T-cell (primary cell): ENCODE measurements at regions of chr7 and their contacts with region 1.

Region 1: DNA sequence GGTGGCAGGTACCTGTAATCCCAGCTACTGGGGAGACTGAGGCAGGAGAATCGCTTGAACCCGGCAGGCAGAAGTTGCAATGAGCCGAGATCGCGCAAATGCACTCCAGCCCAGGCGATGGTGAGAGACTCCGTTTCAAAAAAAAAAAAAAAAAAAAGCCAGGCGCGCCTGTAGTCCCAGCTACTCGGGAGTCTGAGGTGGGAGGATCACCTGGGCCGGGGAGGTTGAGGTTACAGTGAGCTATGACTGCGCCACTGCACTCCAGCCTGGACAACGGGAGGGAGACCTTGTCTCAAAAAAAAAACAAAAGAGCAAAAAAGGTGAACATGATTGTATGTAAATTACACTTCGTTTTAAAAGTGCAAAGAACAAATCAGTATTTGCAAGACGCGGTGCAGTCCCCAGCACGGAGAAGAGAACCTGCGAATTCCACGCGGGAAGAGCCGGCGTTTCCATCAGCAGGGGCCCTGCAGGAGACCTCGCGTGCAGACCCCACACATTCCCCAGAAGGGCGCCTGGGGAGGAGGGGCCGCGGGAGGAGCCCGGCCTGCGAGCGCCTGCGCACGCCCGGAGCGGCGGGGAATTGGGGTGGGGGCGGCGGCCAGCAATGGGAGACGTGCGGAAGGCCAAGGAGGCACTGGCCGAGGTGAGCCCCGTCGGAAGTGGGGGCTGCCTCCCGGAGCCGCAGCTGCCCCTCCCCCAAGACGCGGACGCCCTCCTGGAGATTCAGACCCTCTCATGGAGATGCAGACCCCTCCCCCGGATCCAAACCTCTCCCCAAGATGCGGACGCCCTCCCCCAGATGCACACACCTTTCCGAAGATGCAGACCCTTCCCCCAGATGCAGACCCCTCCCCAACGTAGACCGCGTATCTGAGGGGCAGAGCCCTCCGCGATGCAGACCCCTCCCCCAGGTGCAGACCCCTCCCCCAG is 16.7 kb upstream of the SUN1 start:
- DNase-seq: peak in 4 of 35 experiments; percentile 8 to 29 (median 13)
- ATAC-seq: no peak
- H3K4me3 ChIP-seq: peak overlapping the region; percentile 53 to 57
- H3K4me3 Mint-ChIP-seq: peak overlapping the region; percentile 76 to 94 (median 88)
- H3K27ac ChIP-seq: no peak overlapping the region
- H3K27ac Mint-ChIP-seq: peak overlapping the region in 1 of 2 donors; percentile 69
- H3K4me1 ChIP-seq: peaks cover 26 to 46% of the 10 kb centered on the region in 2 experiments
- H3K4me1 Mint-ChIP-seq: peaks cover 56 to 68% (median 58%) of the 10 kb centered on the region in 3 donors
- H3K27me3 ChIP-seq: peaks cover 0 to 22% of the 10 kb centered on the region in 2 experiments
- H3K27me3 Mint-ChIP-seq: no peaks in the 10 kb centered on the region

Region 2: GRCh38 chr7:703049-703448 is 112.5 kb before region 1 on chr7:
- CTCF ChIA-PET with region 1: no interaction called
- POLR2A ChIA-PET with region 1: interaction called in 1 of 2 experiments, 15 read pairs
- DNase-seq: no peak
- ATAC-seq: no peak
- H3K4me3 ChIP-seq: no peak overlapping the region
- H3K4me3 Mint-ChIP-seq: no peak overlapping the region
- H3K27ac ChIP-seq: no peak overlapping the region
- H3K27ac Mint-ChIP-seq: no peak overlapping the region
- H3K4me1 ChIP-seq: no peaks in the 10 kb centered on the region
- H3K4me1 Mint-ChIP-seq: peaks cover 0 to 14% (median 2%) of the 10 kb centered on the region in 3 donors
- H3K27me3 ChIP-seq: no peaks in the 10 kb centered on the region
- H3K27me3 Mint-ChIP-seq: no peaks in the 10 kb centered on the region

Region 3: GRCh38 chr7:1386623-1387220 is 571.2 kb after region 1 on chr7:
- CTCF ChIA-PET with region 1: no interaction called
- POLR2A ChIA-PET with region 1: no interaction called
- DNase-seq: no peak
- ATAC-seq: no peak
- H3K4me3 ChIP-seq: no peak overlapping the region
- H3K4me3 Mint-ChIP-seq: no peak overlapping the region
- H3K27ac ChIP-seq: no peak overlapping the region
- H3K27ac Mint-ChIP-seq: no peak overlapping the region
- H3K4me1 ChIP-seq: no peaks in the 10 kb centered on the region
- H3K4me1 Mint-ChIP-seq: peaks cover 0 to 8% (median 0%) of the 10 kb centered on the region in 3 donors
- H3K27me3 ChIP-seq: peaks cover 0 to 67% of the 10 kb centered on the region in 2 experiments
- H3K27me3 Mint-ChIP-seq: peaks cover 24 to 33% of the 10 kb centered on the region in 2 donors

Region 4: GRCh38 chr7:2471396-2471795 is 1655.8 kb after region 1 on chr7:
- CTCF ChIA-PET with region 1: no interaction called
- POLR2A ChIA-PET with region 1: no interaction called
- DNase-seq: no peak
- ATAC-seq: no peak
- H3K4me3 ChIP-seq: no peak overlapping the region
- H3K4me3 Mint-ChIP-seq: no peak overlapping the region
- H3K27ac ChIP-seq: no peak overlapping the region
- H3K27ac Mint-ChIP-seq: no peak overlapping the region
- H3K4me1 ChIP-seq: peaks cover 0 to 9% of the 10 kb centered on the region in 2 experiments
- H3K4me1 Mint-ChIP-seq: peaks cover 2 to 6% (median 4%) of the 10 kb centered on the region in 3 donors
- H3K27me3 ChIP-seq: peaks cover 0 to 30% of the 10 kb centered on the region in 2 experiments
- H3K27me3 Mint-ChIP-seq: peaks cover 2 to 10% of the 10 kb centered on the region in 2 donors